H1 (cell line): ENCODE measurements at regions of chr11 and their contacts with region 1.

Region 1: GRCh38 chr11:117107701-117108590 is 9.7 kb upstream of the SIK3 start:
- DNase-seq: no peak
- H3K4me3 ChIP-seq: no peak overlapping the region
- H3K27ac ChIP-seq: no peak overlapping the region
- H3K4me1 ChIP-seq: no peaks in the 10 kb centered on the region
- H3K27me3 ChIP-seq: no peaks in the 10 kb centered on the region
- CTCF ChIP-seq: no peak
- EP300 ChIP-seq: no peak
- POLR2A ChIP-seq: no peak
- RAD21 ChIP-seq: no peak

Region 2: DNA sequence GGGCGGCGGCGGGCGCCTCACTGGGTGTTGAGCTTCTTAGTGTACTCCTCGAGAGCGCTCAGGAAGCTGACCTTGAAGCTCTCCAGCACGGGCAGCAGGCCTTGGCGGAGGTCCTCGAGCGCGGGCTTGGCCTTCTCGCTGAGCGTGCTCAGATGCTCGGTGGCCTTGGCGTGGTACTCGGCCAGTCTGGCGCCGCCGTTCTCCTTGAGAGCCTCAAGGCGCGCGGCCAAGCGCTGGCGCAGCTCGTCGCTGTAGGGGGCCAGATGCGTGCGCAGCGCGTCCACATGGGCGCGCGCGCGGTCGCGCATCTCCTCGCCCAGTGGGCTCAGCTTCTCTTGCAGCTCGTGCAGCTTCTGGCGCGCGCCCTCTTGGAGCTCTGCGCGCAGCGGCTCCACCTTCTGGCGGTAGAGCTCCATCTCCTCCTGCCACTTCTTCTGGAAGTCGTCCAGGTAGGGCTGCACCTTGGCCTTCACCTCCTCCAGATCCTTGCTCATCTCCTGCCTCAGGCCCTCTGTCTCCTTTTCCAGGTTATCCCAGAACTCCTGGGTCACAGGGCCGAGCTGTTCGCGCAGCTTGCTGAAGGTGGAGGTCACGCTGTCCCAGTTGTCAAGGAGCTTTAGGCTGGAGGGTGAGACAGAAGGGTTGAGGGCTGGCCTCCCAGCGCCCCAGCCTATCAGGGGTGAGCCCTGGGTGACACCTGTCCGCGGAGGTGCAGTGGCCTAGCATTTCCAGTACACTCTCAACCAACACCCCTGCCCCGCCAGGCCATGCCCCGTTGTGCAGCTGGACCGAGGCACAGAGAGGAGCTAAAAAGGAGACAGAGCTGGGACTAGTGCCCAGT is 271.9 kb before region 1 on chr11:
- CTCF ChIA-PET with region 1: interaction called, 12 read pairs
- POLR2A ChIA-PET with region 1: interaction called, 3 read pairs
- DNase-seq: peak; percentile 83 to 87
- H3K4me3 ChIP-seq: peak overlapping the region; percentile 42 to 64 (median 50)
- H3K27ac ChIP-seq: no peak overlapping the region
- H3K4me1 ChIP-seq: peaks cover 0 to 24% (median 4%) of the 10 kb centered on the region in 4 experiments; a peak in 6 of 7 replicates
- H3K27me3 ChIP-seq: peaks cover 0 to 7% (median 5%) of the 10 kb centered on the region in 4 experiments; a peak in 3 of 7 replicates
- CTCF ChIP-seq: peak; percentile 74 to 77 (median 76)
- EP300 ChIP-seq: no peak
- POLR2A ChIP-seq: 0 out of 3 replicates have a peak, but pooled peaks of 1 of the 2 experiments have one; percentile 52
- RAD21 ChIP-seq: peak; percentile 65 to 72

Region 3: GRCh38 chr11:116871248-116871647 is 236.7 kb before region 1 on chr11:
- CTCF ChIA-PET with region 1: interaction called, 65 read pairs
- POLR2A ChIA-PET with region 1: no interaction called
- DNase-seq: no peak
- H3K4me3 ChIP-seq: no peak overlapping the region
- H3K27ac ChIP-seq: no peak overlapping the region
- H3K4me1 ChIP-seq: no peaks in the 10 kb centered on the region
- H3K27me3 ChIP-seq: no peaks in the 10 kb centered on the region
- CTCF ChIP-seq: no peak
- EP300 ChIP-seq: no peak
- POLR2A ChIP-seq: no peak
- RAD21 ChIP-seq: no peak

Region 4: GRCh38 chr11:116890193-116890592 is 217.8 kb before region 1 on chr11:
- CTCF ChIA-PET with region 1: interaction called, 16 read pairs
- POLR2A ChIA-PET with region 1: no interaction called
- DNase-seq: no peak
- H3K4me3 ChIP-seq: no peak overlapping the region
- H3K27ac ChIP-seq: no peak overlapping the region
- H3K4me1 ChIP-seq: no peaks in the 10 kb centered on the region
- H3K27me3 ChIP-seq: no peaks in the 10 kb centered on the region
- CTCF ChIP-seq: no peak
- EP300 ChIP-seq: no peak
- POLR2A ChIP-seq: no peak
- RAD21 ChIP-seq: no peak

Region 5: DNA sequence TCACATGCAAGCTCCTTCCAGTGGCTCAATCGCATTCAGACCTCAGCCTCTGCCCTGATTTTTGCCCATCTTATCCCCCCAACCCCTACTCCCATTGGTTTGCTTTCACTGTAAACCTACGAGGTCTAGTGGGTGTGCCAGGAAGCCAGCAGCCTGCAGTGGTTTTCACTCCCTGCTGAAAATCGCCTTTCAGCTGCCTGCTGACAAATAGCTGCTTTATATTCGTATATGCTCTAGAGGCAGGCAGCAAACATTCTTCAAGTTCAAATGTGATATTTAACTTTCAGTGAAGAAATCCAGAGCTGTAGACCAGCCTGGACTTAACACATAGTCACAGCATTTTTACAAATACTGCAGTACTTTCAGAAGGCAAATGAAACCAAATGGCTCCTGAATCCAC is 177.8 kb before region 1 on chr11:
- CTCF ChIA-PET with region 1: interaction called, 13 read pairs
- POLR2A ChIA-PET with region 1: no interaction called
- DNase-seq: no peak
- H3K4me3 ChIP-seq: no peak overlapping the region
- H3K27ac ChIP-seq: no peak overlapping the region
- H3K4me1 ChIP-seq: peaks cover 1 to 7% (median 5%) of the 10 kb centered on the region in 4 experiments; a peak in 4 of 7 replicates
- H3K27me3 ChIP-seq: no peaks in the 10 kb centered on the region
- CTCF ChIP-seq: no peak
- EP300 ChIP-seq: no peak
- POLR2A ChIP-seq: no peak
- RAD21 ChIP-seq: no peak

Region 6: DNA sequence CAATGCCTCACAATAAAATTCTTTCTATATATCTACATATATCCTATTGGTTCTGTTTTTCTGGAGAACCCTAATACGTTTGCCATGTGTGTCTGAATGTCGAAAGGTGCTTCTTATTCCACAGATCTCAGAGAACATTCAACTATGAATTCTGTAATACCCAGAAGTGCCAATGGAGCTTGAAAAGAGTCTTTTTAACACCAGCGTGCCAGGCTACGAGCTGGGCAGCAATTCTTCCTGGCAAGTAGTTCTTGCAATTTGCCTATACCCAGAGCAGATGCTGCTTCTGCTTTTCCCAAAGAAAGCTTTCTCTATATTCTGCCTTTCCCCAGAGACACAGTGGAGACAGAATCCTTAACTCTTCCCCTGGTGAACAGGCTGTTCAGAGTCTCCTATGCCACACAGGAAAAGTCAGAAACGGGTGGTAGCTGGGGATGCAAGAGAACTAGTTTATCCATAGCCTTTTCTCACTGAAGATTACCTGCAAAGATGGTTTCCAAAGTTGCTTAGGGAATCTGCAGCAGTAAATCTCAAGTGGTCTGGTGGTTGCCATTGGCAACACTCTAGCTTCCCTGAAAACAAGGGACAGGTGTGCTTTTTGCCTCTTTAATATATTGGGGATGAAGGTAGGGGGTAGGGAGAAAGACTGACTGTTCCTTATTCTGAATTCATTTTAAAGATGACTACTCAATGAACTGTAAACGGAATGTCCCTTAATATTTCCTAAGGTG is 19.4 kb after region 1 on chr11:
- CTCF ChIA-PET with region 1: interaction called, 27 read pairs
- POLR2A ChIA-PET with region 1: no interaction called
- DNase-seq: no peak
- H3K4me3 ChIP-seq: no peak overlapping the region
- H3K27ac ChIP-seq: no peak overlapping the region
- H3K4me1 ChIP-seq: no peaks in the 10 kb centered on the region
- H3K27me3 ChIP-seq: no peaks in the 10 kb centered on the region
- CTCF ChIP-seq: no peak
- EP300 ChIP-seq: no peak
- POLR2A ChIP-seq: no peak
- RAD21 ChIP-seq: no peak

Region 7: DNA sequence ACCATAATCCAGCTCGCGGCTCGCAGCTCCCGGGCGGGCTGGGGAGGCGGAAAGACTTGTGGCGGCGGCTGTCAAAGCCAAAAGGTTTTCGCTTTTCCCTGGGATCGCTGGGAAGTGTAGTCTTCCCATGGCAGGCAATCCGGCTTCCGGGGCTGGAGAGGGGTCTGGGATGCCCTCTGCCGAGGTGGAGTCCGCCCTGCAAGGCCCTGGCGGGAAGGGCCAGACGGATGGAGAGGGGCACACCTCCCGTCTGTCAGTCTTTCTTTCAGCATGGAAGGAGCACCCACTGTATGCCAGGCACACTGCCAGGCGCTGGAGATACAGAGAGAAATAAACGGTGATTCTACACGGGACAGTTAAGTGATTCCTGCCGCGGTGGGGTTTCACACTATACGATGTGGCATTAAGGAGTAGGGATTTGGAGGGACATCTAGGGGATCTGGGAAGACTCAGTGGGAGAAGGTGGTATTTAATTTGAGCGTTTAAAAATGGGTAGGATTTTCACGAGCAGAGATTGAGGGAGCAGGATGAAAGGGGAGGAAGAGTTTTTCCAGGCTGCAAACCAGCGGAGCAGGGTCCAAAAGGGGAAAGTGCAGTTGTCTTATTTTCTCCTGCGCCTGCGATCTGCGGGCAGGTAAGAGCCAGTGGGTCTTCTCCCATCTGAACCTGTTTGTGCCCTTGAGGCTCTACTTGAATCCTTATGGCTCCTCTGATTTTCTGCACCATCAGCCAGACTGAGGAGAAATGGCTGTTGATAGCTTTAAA is 208.4 kb after region 1 on chr11 and contains the start of gene BACE1:
- CTCF ChIA-PET with region 1: no interaction called
- POLR2A ChIA-PET with region 1: no interaction called
- DNase-seq: peak; percentile 72 to 87
- H3K4me3 ChIP-seq: peak within 1 kb of the TSS; percentile 46 to 78 (median 72)
- H3K27ac ChIP-seq: no peak within 1 kb of the TSS
- H3K4me1 ChIP-seq: peaks cover 5 to 10% (median 8%) of the 10 kb centered on the region in 4 experiments
- H3K27me3 ChIP-seq: peaks cover 0 to 7% (median 2%) of the 10 kb centered on the region in 4 experiments; a peak in 5 of 7 replicates
- CTCF ChIP-seq: peak; percentile 62 to 69 (median 66)
- EP300 ChIP-seq: no peak
- POLR2A ChIP-seq: no peak
- RAD21 ChIP-seq: peak; percentile 66 to 72
- total RNA-seq, gene BACE1: 7.5 and 7.7 TPM in 2 replicates